ENCODE measurements at regions of chr3 and their contacts with region 1.

Region 1: GRCh38 chr3:138915503-138916498 is 31.1 kb downstream of the FOXL2 start:
- DNase-seq: peak; percentile 87
- ATAC-seq: peak; percentile 73
- H3K4me3 ChIP-seq: peak overlapping the region; percentile 94
- H3K27ac ChIP-seq: peak overlapping the region; percentile 96
- H3K4me1 ChIP-seq: peaks cover 28% of the 10 kb centered on the region
- H3K27me3 ChIP-seq: no peaks in the 10 kb centered on the region
- CTCF ChIP-seq: peak; percentile 68

Region 2: DNA sequence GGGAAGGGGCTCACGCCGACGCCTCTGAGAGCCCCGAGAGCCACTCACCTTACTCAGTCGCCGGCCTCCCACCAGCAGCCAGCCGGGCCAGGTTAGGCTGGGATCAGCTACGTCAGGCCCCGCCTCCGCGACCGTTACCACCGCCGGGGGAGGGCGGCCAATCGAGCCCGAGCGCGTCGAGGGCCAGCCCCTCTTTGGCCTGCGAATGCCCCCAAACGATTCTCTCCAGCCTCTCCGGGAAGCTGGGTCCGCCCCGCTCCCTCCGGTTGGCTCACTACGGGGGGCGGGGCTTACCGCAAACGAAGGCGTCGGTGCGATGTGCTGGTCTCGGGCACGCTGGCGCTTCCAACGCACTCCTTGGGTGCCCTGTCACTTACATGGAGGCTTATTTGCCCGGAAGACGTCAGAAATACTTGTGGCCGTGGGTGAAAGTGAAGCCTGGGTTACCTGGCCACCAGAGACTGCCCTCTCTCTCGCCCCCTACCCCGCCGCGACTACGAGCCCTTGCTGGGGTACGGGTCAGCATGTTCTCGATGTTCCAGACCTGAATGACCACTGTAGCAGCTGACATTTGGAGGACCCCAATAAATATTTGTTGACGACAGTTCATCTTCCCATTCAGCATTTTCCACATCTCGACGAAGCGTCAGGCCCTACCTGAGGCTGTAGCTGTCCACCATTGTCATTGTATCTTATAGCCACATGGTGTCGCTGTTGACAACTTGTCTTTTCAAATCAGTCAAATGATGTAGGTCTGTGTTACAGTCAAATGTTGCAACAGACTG is 321.5 kb before region 1 on chr3 and contains the start of gene CEP70:
- CTCF ChIA-PET with region 1: interaction called, 16 read pairs
- POLR2A ChIA-PET with region 1: interaction called, 3 read pairs
- intact Hi-C with region 1: loop called (anchors 1 kb)
- DNase-seq: peak; percentile 93
- ATAC-seq: peak; percentile 91
- H3K4me3 ChIP-seq: peak within 1 kb of the TSS; percentile 91
- H3K27ac ChIP-seq: peak within 1 kb of the TSS; percentile 62
- H3K4me1 ChIP-seq: 0 out of 2 replicates have a peak, but pooled peaks cover 9% of the 10 kb centered on the region
- H3K27me3 ChIP-seq: no peaks in the 10 kb centered on the region
- CTCF ChIP-seq: peak; percentile 84
- total RNA-seq, gene CEP70: 11.3 and 16.7 TPM in 2 replicates

Region 3: GRCh38 chr3:138712086-138712485 is 203.7 kb before region 1 on chr3:
- CTCF ChIA-PET with region 1: interaction called, 18 read pairs
- POLR2A ChIA-PET with region 1: no interaction called
- intact Hi-C with region 1: no loop called
- DNase-seq: no peak
- ATAC-seq: no peak
- H3K4me3 ChIP-seq: no peak overlapping the region
- H3K27ac ChIP-seq: no peak overlapping the region
- H3K4me1 ChIP-seq: no peaks in the 10 kb centered on the region
- H3K27me3 ChIP-seq: no peaks in the 10 kb centered on the region
- CTCF ChIP-seq: no peak

Region 4: GRCh38 chr3:138774529-138775253 is 141.1 kb before region 1 on chr3:
- CTCF ChIA-PET with region 1: interaction called, 9 read pairs
- POLR2A ChIA-PET with region 1: no interaction called
- intact Hi-C with region 1: loop called (anchors 2 kb)
- DNase-seq: peak; percentile 92
- ATAC-seq: peak; percentile 96
- H3K4me3 ChIP-seq: peak overlapping the region; percentile 26; the same call in 1 of the 2 replicates
- H3K27ac ChIP-seq: peak overlapping the region; percentile 62
- H3K4me1 ChIP-seq: peaks cover 32% of the 10 kb centered on the region
- H3K27me3 ChIP-seq: no peaks in the 10 kb centered on the region
- CTCF ChIP-seq: no peak

Region 5: GRCh38 chr3:138834359-138835212 is 81.2 kb before region 1 on chr3 and contains the start of gene PIK3CB:
- CTCF ChIA-PET with region 1: no interaction called
- POLR2A ChIA-PET with region 1: no interaction called
- intact Hi-C with region 1: loop called (anchors 1 kb)
- DNase-seq: peak; percentile 87
- ATAC-seq: peak; percentile 91
- H3K4me3 ChIP-seq: peak within 1 kb of the TSS; percentile 99
- H3K27ac ChIP-seq: peak within 1 kb of the TSS; percentile 73
- H3K4me1 ChIP-seq: peaks cover 5% of the 10 kb centered on the region; the same call in 1 of the 2 replicates
- H3K27me3 ChIP-seq: no peaks in the 10 kb centered on the region
- CTCF ChIP-seq: peak; percentile 37; the same call in 1 of the 2 replicates
- total RNA-seq, gene PIK3CB: 8.3 and 15.7 TPM in 2 replicates

Region 6: DNA sequence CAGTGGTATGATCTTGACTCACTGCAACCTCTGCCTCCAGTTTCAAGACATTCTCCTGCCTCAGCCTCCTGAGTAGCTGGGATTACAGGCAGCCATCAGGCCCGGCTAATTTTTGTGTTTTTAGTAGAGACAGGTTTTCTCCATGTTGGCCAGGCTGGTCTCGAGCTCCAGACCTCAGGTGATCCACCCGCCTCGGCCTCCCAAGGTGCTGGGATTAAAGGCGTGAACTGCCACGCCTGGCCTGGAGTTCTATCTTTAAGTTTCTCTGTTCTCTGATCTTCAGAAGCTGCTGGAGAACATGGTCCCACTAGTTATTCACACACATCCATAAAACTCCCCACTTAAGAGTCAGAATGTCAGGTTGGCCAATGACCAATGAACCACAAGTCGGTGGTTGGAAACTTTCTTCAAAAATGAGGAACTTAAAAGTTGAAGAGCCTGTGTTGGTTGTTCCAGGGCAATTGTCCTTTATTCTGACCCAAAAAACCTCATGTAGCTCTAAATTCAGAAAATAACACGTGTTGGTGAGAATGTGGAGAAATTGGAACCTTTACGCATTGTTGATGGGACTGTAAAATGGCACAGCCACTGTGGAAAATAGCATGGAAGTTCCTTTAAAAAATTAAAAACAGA is 25.1 kb before region 1 on chr3:
- CTCF ChIA-PET with region 1: interaction called, 3 read pairs
- POLR2A ChIA-PET with region 1: no interaction called
- intact Hi-C with region 1: loop called (anchors 1 kb)
- DNase-seq: no peak
- ATAC-seq: no peak
- H3K4me3 ChIP-seq: no peak overlapping the region
- H3K27ac ChIP-seq: peak overlapping the region; percentile 45
- H3K4me1 ChIP-seq: peaks cover 6% of the 10 kb centered on the region
- H3K27me3 ChIP-seq: no peaks in the 10 kb centered on the region
- CTCF ChIP-seq: no peak